Activated CD4-positive, alpha-beta T cell treated with anti-CD3 and anti-CD28 coated beads for 36 hours (primary cell): ENCODE measurements at regions of chr3 and their contacts with region 1.

Region 1: GRCh38 chr3:179562591-179563270 is at the start of gene ACTL6A:
- DNase-seq: peak; percentile 99
- ATAC-seq: peak; percentile 92
- H3K4me3 Mint-ChIP-seq: peak within 1 kb of the TSS; percentile 83
- H3K27ac Mint-ChIP-seq: peak within 1 kb of the TSS; percentile 96
- H3K4me1 Mint-ChIP-seq: peaks cover 26% of the 10 kb centered on the region
- H3K27me3 Mint-ChIP-seq: peaks cover 6% of the 10 kb centered on the region
- total RNA-seq, gene ACTL6A: 85.3 to 113 TPM

Region 2: GRCh38 chr3:179015551-179016020 is 547.1 kb before region 1 on chr3:
- CTCF ChIA-PET with region 1: interaction called, 3 read pairs
- POLR2A ChIA-PET with region 1: no interaction called
- intact Hi-C with region 1: loop called (anchors 2 to 5 kb)
- DNase-seq: peak; percentile 65
- ATAC-seq: peak; percentile 83
- H3K4me3 Mint-ChIP-seq: no peak overlapping the region
- H3K27ac Mint-ChIP-seq: no peak overlapping the region
- H3K4me1 Mint-ChIP-seq: peaks cover 35% of the 10 kb centered on the region
- H3K27me3 Mint-ChIP-seq: peaks cover 4% of the 10 kb centered on the region

Region 3: DNA sequence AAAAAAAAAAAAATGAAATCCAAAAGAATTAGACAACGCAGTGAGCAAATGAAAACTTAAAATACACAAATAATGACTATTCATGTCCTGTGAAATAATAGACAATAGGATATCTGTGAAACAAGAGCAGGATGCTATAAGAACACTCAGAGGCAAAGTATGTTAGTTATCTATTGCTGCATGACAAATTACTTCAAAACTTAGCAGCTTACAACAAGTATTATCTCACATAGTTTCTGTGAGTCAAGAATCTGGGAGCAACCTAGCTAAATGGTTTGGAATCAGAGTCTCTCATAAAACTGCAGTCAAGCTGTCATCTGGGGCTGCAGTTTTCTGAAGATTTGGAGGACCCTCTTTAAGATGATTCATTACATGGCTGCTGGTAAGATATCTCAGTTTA is 454.6 kb before region 1 on chr3:
- CTCF ChIA-PET with region 1: no interaction called
- POLR2A ChIA-PET with region 1: no interaction called
- intact Hi-C with region 1: loop called in 1 of 2 experiments (anchors 1 kb)
- DNase-seq: no peak
- ATAC-seq: no peak
- H3K4me3 Mint-ChIP-seq: no peak overlapping the region
- H3K27ac Mint-ChIP-seq: no peak overlapping the region
- H3K4me1 Mint-ChIP-seq: no peaks in the 10 kb centered on the region
- H3K27me3 Mint-ChIP-seq: peaks cover 5% of the 10 kb centered on the region

Region 4: DNA sequence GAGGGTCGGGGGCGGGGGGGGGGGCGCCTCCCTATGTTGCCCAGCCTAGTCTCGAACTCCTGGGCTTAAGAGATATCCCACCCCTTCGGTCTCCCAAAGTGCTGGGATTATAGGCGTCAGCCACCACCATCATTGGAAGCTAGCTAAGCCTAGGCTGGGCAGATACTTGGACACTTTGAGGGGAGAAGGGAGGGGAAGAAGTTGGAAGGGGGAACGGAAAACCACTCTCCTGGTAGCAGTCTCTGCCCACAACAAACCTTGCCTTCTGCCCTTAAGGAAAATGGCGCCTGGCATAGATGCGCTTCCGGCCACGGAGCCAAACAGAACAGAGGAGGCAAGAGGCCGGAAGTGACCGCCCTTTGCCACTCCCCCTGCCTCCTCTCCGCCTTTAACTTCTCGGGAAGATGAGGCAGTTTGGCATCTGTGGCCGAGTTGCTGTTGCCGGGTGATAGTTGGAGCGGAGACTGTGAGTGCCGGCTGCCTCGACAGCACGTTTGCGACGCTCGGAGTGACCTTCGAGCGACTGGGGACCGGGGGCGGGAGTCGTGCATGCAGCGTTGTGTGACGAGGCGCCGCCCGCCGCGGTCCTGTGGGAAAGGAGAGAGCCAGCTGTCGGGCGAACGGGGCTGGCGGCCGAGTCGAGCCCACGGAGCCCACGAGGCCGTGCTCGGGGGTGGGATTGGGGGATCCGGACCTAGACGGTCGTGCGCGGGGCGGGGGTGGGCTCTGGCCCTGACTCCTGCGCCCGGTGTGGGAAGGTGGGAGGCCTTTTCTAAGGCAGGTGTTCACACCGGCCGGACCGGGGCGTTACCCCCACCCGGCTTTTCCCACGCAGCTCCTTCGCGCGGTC is 215.2 kb before region 1 on chr3 and contains the start of gene MFN1:
- CTCF ChIA-PET with region 1: no interaction called
- POLR2A ChIA-PET with region 1: no interaction called
- intact Hi-C with region 1: loop called (anchors 1 kb)
- DNase-seq: peak; percentile 94
- ATAC-seq: peak; percentile 98
- H3K4me3 Mint-ChIP-seq: peak within 1 kb of the TSS; percentile 99
- H3K27ac Mint-ChIP-seq: peak within 1 kb of the TSS; percentile 93
- H3K4me1 Mint-ChIP-seq: peaks cover 22% of the 10 kb centered on the region
- H3K27me3 Mint-ChIP-seq: no peaks in the 10 kb centered on the region
- total RNA-seq, gene MFN1: 24.4 to 30.4 TPM

Region 5: DNA sequence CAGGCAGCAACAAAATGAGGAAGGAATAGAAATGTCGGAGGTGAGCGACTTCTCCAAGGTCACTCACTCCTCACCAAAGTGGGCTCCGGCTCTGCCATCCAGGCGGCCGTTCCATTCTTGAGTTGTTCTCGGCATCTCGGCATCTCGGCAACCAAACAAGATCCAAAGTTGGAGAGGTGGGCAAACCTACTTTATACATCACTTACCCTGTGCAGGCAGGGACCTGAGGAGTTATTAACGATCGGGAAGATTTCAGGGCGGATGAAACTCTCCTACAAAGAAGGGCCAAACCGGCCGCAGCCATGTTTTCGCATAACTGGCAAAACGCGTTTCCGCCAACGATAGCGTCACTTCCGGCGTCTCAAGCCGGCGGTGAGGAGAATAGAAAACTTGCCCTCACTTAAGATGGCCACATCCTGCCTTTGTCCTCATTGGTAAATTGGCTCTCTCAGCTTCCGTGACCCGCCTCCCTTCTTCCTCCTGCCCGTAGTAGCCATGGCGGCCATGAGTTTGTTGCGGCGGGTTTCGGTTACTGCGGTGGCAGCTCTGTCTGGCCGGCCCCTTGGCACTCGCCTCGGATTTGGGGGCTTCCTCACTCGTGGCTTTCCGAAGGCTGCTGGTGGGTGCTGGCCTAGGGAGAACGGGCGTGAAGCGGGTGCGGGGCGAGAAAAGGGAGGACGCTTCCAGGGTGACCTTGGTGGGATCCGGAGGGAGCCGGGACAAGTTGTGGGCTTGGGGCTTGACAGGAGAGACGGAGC is 41.8 kb after region 1 on chr3 and contains the starts of genes MRPL47 and NDUFB5:
- CTCF ChIA-PET with region 1: interaction called, 5 read pairs
- POLR2A ChIA-PET with region 1: interaction called, 10 read pairs
- intact Hi-C with region 1: loop called (anchors 1 kb)
- DNase-seq: peak; percentile 95
- ATAC-seq: peak; percentile 92
- H3K4me3 Mint-ChIP-seq: peak within 1 kb of the TSS; percentile 92
- H3K27ac Mint-ChIP-seq: peak within 1 kb of the TSS; percentile 100
- H3K4me1 Mint-ChIP-seq: peaks cover 37% of the 10 kb centered on the region
- H3K27me3 Mint-ChIP-seq: no peaks in the 10 kb centered on the region
- total RNA-seq, gene MRPL47: 49.8 to 56.4 TPM
- total RNA-seq, gene NDUFB5: 105 to 110 TPM

Region 6: DNA sequence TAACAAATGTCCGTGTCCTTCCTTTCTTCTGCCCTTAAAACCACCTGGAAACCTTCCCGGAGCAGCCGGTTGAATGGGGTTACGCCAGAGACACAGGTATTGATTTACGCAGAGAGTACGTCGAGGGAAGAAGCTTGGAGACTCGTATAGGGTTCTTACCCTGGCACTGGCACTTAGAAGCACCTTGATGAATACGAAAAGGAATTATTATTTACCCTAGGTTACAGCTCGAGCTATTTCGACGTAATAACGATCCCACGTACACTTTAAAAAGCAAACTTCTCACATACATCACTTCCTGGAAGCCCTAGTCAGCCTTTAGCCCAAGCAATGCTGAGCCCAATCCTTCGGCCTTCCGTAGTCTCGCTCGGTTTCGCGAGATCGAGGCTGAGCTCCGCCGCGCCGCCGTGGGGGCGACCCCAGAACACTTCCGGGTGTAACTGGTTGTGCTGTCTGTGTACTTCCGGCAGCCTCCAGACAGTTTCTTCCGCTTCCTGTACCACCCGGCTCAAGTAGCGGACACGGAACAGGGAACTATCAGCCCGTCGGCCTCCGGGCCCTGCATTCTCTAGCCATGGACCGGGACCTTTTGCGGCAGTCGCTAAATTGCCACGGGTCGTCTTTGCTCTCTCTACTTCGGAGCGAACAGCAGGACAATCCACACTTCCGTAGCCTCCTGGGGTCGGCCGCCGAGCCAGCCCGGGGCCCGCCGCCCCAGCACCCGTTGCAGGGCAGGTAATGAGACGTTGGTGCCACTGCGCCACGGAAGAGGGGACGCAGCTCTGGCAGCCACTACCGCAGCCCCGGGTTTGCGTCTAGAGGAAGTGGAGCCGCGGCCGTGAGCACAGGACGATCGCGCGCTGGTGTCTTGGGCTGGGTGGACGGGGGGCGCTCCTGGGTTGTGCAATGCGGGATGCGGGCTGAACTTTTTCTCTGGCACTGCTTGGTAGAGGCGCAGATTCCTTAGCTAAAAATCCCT is 1039.2 kb after region 1 on chr3 and contains the start of gene TTC14:
- CTCF ChIA-PET with region 1: no interaction called
- POLR2A ChIA-PET with region 1: interaction called, 4 read pairs
- intact Hi-C with region 1: loop called (anchors 5 kb)
- DNase-seq: peak; percentile 96
- ATAC-seq: peak; percentile 96
- H3K4me3 Mint-ChIP-seq: peak within 1 kb of the TSS; percentile 98
- H3K27ac Mint-ChIP-seq: peak within 1 kb of the TSS; percentile 98
- H3K4me1 Mint-ChIP-seq: peaks cover 17% of the 10 kb centered on the region
- H3K27me3 Mint-ChIP-seq: peaks cover 4% of the 10 kb centered on the region
- total RNA-seq, gene TTC14: 38.0 to 41.2 TPM